Cardiac septum (tissue), 1 donor: ENCODE measurements at regions of chr11 and their contacts with region 1.

Region 1: GRCh38 chr11:128630367-128631230 is 43.2 kb upstream of the ETS1 start:
- DNase-seq: peak; percentile 95

Region 2: DNA sequence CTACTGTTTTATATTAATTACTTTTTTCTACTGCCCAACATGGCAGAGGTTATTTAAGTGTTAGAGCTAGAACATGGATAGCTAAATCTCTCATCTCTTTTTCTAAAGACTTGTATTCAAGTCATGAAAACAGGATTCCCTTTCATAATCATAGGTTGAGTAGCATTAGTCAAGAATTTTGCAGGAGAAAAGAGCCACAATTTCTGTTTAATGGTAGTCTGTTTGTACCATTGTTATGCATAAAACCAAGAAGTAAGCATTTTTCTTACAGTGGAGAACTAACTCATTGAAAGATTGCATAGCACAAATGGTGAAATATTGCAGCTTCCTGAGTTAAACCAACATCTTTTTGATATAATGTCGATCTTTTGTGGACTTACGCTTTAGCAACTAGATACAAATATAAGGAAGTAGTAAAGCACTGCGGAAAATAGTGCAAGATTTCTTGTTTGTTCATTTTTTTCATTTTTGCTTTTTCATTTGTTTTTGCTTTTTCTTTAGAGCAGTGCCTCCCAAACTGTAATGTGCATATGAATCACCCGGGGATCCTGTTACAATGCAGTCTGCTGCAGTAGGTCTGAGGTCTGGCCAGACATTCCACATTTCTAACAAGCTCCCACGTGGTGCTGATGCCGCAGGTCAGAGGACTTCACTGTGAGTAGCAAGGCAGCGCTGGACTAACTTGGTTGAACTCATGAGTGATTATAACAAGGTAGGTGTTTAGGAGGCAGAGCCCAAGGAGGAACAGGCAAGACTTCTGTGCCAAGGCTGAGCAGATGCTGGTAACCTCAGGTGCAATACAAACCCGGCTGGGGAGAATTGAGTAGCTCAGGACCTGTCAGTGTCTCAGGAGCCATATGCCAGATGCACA is 47.9 kb before region 1 on chr11:
- intact Hi-C with region 1: no loop called
- DNase-seq: peak; percentile 81

Region 3: DNA sequence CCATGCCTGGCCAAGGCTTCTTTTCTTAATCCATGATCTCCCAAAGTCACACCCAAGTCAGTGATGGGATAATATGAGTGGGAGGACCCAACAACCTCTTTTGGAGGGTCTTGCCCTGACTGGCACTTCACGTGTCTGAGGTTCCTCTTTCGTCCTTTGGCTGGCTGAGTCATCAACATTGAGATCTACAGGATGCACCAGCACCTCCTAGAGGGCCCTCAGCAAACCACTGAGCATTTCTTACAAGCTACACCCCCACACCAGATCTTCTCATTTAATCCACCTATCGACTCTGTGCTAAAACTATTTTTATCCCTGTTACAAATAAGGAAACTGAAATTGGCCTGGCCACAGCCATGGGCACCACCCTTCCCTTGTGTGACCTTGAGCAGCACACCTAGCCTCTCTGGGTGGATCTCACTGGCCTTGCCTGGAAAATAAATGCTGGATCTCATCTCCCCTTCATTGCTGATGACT is 126.7 kb after region 1 on chr11:
- intact Hi-C with region 1: no loop called
- DNase-seq: no peak

Region 4: DNA sequence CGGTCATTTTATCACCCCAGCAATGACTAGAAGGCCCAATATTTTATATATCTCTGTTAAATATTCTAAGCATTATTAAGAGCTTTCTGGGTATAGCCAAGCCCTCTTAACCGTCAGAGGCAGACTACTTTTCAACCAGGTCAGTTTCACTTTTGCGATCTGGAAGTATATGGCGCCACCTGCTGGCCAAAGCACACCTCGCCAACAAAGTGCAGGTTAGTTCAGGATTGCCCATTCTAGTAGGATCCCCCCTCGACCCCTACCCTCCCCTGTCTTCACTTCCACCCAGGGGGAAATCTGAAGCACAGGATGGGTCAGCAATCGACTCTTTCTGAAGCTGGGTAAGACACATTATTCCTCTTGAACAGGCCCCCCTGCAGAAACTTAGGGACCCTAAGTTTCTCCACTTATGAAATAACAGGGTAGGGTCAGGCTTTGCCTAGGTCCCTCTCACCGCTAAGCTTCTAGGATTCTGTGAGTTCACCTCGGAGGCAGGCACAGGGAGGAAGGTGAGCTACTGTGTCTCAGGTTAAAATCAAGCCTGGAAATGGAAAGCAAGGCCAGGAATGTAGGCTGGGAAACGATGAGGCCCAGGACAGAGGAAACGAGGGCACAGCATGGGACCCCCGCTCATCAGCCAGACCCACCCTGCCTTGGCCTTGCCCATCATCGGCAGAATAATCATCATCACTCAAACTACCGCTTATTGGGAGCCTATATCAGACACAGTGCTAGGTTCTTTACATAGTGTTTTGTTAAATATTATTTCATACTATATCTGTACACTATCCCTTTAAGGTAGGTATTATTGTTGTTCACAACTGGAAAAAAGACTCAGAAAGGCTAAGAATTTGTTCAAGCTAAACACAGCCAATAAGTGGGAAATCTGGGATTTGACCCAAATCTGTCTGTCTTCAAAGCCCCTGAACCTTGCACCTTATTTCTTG is 200.8 kb after region 1 on chr11:
- intact Hi-C with region 1: loop called (anchors 5 kb)
- DNase-seq: peak; percentile 89